CD8-positive, alpha-beta T cell (primary cell): ENCODE measurements at regions of chr11 and their contacts with region 1.

Region 1: DNA sequence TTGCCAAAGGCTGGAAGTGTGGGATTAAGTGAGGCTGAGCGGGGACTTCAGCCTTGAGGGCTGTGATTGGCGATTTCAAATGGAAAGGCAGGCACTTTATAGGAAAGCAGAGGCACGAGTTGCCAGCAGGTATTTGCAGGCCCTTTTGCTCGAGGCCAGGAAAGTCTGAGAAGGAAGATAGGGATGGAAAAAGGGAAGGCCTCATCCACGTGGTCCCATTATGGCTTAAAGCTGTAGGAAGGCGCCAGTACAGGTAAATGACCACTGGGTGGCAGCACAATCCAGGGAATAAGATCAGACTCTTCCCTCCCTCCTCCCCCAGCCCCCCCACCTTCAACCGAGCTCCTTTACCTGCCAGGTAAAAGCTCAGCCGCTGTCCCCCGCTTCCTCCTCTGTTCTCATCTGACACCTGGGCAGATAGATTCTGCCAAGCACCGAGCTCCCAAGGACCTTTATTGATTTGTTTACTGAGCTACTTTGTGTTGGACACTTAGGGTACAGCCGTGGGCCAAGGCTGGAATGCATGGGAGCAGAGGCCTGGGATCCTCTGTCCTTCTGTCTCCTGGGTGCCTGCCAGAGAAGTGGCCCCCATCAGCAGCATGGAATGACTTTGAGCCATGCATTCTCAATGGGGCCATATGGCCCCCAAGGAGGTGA is 7.5 kb downstream of the P2RX3 start:
- DNase-seq: peak; percentile 45 to 85 (median 73)
- ATAC-seq: peak; percentile 93
- H3K4me3 ChIP-seq: no peak overlapping the region
- H3K4me3 Mint-ChIP-seq: no peak overlapping the region
- H3K27ac ChIP-seq: no peak overlapping the region
- H3K27ac Mint-ChIP-seq: no peak overlapping the region
- H3K4me1 ChIP-seq: no peaks in the 10 kb centered on the region
- H3K4me1 Mint-ChIP-seq: peaks cover 2% of the 10 kb centered on the region
- H3K27me3 ChIP-seq: no peaks in the 10 kb centered on the region
- H3K27me3 Mint-ChIP-seq: peaks cover 3% of the 10 kb centered on the region
- CTCF ChIP-seq: peak; percentile 80

Region 2: GRCh38 chr11:56841210-56841810 is 504.4 kb before region 1 on chr11:
- CTCF ChIA-PET with region 1: no interaction called
- POLR2A ChIA-PET with region 1: no interaction called
- intact Hi-C with region 1: loop called in 1 of 2 experiments (anchors 5 kb)
- DNase-seq: peak in 3 of 9 experiments; percentile 18 to 39 (median 18)
- ATAC-seq: no peak
- H3K4me3 ChIP-seq: no peak overlapping the region
- H3K4me3 Mint-ChIP-seq: no peak overlapping the region
- H3K27ac ChIP-seq: no peak overlapping the region
- H3K27ac Mint-ChIP-seq: no peak overlapping the region
- H3K4me1 ChIP-seq: no peaks in the 10 kb centered on the region
- H3K4me1 Mint-ChIP-seq: no peaks in the 10 kb centered on the region
- H3K27me3 ChIP-seq: no peaks in the 10 kb centered on the region
- H3K27me3 Mint-ChIP-seq: peaks cover 5% of the 10 kb centered on the region
- CTCF ChIP-seq: peak; percentile 25

Region 3: GRCh38 chr11:57358543-57358961 is 12.9 kb after region 1 on chr11:
- CTCF ChIA-PET with region 1: interaction called, 39 read pairs
- POLR2A ChIA-PET with region 1: no interaction called
- intact Hi-C with region 1: no loop called
- DNase-seq: no peak
- ATAC-seq: no peak
- H3K4me3 ChIP-seq: no peak overlapping the region
- H3K4me3 Mint-ChIP-seq: no peak overlapping the region
- H3K27ac ChIP-seq: no peak overlapping the region
- H3K27ac Mint-ChIP-seq: no peak overlapping the region
- H3K4me1 ChIP-seq: no peaks in the 10 kb centered on the region
- H3K4me1 Mint-ChIP-seq: no peaks in the 10 kb centered on the region
- H3K27me3 ChIP-seq: no peaks in the 10 kb centered on the region
- H3K27me3 Mint-ChIP-seq: peaks cover 12% of the 10 kb centered on the region
- CTCF ChIP-seq: no peak

Region 4: DNA sequence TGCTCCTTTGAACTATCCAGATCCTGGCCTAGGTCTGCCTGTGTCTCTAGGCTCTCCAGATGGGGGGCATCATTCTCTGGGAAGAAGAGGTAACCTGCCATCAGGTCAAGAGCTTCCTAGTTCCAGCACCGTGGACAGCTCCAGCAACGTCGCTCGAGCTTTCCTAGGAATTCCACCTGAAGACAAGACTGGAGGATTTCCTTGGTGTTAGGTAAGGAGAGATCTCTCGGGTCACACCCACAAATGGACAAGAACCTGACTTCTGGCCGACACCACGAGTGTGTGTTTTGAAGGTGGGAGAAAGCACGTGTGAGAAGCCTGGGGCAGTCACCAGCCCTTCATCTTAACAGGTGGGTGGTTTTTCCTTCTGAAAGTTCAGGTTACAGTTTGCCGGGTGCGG is 34.0 kb after region 1 on chr11:
- CTCF ChIA-PET with region 1: no interaction called
- POLR2A ChIA-PET with region 1: no interaction called
- intact Hi-C with region 1: no loop called
- DNase-seq: no peak
- ATAC-seq: no peak
- H3K4me3 ChIP-seq: no peak overlapping the region
- H3K4me3 Mint-ChIP-seq: no peak overlapping the region
- H3K27ac ChIP-seq: no peak overlapping the region
- H3K27ac Mint-ChIP-seq: no peak overlapping the region
- H3K4me1 ChIP-seq: no peaks in the 10 kb centered on the region
- H3K4me1 Mint-ChIP-seq: no peaks in the 10 kb centered on the region
- H3K27me3 ChIP-seq: no peaks in the 10 kb centered on the region
- H3K27me3 Mint-ChIP-seq: peaks cover 25% of the 10 kb centered on the region
- CTCF ChIP-seq: no peak

Region 5: DNA sequence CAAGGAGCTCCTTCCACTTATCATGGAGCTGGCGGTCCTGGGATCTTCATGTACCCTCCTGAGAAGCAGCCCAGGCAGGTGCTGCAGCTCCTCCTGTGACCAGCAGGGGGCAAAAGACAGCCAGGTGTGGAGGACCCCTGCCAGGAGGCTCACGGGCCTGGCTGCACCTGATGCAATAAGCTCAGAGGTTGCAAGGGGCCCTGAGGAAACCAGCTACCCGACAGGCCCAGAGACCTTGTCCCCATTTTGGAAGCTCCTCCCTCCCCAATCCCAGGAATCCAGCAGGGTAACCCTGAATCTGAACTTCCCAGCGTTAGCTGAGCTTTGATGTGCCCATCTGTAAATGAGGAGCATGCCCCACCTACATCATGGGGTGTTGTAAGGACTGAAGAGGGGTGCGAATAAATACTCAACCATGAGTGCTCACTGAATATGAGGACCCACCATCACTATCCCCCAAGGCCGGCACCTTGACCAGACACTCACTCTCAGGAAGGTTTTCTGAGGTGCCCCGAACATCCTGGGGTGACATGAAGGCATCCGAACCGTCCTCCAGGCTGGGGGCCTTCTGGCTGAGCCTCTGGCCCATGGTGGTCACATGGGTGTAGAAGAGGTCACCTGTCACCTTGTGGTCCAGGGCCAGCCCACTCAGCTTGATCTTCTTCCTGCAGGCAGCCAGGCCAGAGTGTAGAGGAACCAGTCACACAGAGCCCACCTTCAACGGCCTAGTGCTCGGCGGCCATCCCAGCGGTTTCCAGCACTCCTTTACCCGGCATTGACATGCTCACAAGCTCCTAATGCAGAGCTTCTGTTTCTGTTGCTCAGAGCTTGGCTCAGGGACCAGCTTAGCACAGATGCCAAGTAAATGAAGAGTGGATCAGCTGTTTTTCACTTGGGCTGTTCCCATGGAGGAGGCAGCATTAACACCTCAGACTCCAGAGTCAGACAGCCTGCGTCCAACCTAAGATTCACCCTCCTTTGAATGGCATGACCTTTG is 148.1 kb after region 1 on chr11:
- CTCF ChIA-PET with region 1: interaction called, 19 read pairs
- POLR2A ChIA-PET with region 1: no interaction called
- intact Hi-C with region 1: no loop called
- DNase-seq: peak; percentile 57 to 85 (median 76)
- ATAC-seq: peak; percentile 97
- H3K4me3 ChIP-seq: no peak overlapping the region
- H3K4me3 Mint-ChIP-seq: no peak overlapping the region
- H3K27ac ChIP-seq: no peak overlapping the region
- H3K27ac Mint-ChIP-seq: no peak overlapping the region
- H3K4me1 ChIP-seq: no peaks in the 10 kb centered on the region
- H3K4me1 Mint-ChIP-seq: no peaks in the 10 kb centered on the region
- H3K27me3 ChIP-seq: no peaks in the 10 kb centered on the region
- H3K27me3 Mint-ChIP-seq: peaks cover 2% of the 10 kb centered on the region
- CTCF ChIP-seq: peak; percentile 91

Region 6: DNA sequence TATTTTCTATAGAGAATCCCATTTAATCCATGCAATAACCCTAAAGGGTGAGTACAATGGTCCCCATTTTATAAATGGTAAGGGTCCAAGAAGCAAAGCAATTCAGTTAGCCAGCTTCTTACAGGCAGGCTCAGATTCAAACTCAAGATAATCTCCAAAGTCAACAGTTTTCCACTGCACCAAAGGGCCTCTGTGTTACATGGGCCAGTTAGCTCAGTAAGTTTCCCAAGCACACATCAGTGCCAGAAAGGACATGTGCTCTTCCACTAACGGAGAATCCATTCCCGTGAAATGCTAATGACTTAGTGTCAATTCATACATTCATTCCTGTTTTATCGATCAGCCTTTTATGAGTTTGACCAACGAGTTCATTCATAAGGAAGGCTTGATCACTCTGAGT is 158.8 kb after region 1 on chr11:
- CTCF ChIA-PET with region 1: no interaction called
- POLR2A ChIA-PET with region 1: no interaction called
- intact Hi-C with region 1: no loop called
- DNase-seq: no peak
- ATAC-seq: no peak
- H3K4me3 ChIP-seq: no peak overlapping the region
- H3K4me3 Mint-ChIP-seq: no peak overlapping the region
- H3K27ac ChIP-seq: no peak overlapping the region
- H3K27ac Mint-ChIP-seq: no peak overlapping the region
- H3K4me1 ChIP-seq: no peaks in the 10 kb centered on the region
- H3K4me1 Mint-ChIP-seq: peaks cover 8% of the 10 kb centered on the region
- H3K27me3 ChIP-seq: no peaks in the 10 kb centered on the region
- H3K27me3 Mint-ChIP-seq: no peaks in the 10 kb centered on the region
- CTCF ChIP-seq: no peak

Region 7: DNA sequence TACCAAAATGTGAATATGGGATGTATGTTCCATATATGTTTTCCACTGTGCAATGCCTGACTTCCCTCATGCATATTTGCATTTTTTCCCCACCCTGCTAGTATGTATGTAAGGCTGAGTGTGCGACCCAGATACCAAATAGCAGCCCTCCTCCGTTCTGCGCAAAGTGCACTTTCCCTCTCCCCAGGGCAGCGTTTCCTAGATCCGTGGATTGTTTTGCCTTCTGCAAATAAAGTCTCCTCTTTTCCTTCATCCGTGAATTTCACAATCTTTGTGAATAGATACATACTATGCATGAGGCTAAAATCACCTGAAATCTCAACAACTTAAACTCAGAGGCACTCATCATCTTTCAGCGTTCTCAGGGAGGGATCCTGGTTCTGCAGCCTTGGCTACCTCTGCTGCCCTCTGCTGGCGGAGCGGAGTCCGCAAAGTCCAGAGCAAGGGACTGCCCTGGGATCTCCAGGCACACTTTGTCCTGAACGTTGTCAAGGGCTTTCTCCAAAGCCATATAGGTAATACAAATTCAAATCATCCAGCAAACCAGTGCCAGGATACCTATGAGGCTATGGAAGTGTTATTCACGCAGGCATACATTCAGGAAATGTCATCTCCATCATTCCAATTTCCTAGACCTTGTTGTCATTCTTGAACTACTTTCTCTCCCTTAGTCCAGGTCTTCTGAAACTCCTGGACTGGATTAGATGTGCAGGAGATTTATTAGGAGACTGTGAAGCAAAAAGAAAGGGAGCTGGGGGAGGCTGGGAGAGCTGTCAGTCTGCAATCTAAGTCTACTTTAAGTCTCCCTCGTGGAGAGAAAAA is 1329.9 kb after region 1 on chr11:
- CTCF ChIA-PET with region 1: no interaction called
- POLR2A ChIA-PET with region 1: no interaction called
- intact Hi-C with region 1: loop called in 1 of 2 experiments (anchors 10 kb)
- DNase-seq: peak; percentile 46 to 86 (median 72)
- ATAC-seq: peak; percentile 80
- H3K4me3 ChIP-seq: no peak overlapping the region
- H3K4me3 Mint-ChIP-seq: no peak overlapping the region
- H3K27ac ChIP-seq: no peak overlapping the region
- H3K27ac Mint-ChIP-seq: no peak overlapping the region
- H3K4me1 ChIP-seq: no peaks in the 10 kb centered on the region
- H3K4me1 Mint-ChIP-seq: no peaks in the 10 kb centered on the region
- H3K27me3 ChIP-seq: no peaks in the 10 kb centered on the region
- H3K27me3 Mint-ChIP-seq: no peaks in the 10 kb centered on the region
- CTCF ChIP-seq: peak; percentile 93